Right cardiac atrium (tissue), 5 donors: ENCODE measurements at regions of chr17 and their contacts with region 1.

Region 1: DNA sequence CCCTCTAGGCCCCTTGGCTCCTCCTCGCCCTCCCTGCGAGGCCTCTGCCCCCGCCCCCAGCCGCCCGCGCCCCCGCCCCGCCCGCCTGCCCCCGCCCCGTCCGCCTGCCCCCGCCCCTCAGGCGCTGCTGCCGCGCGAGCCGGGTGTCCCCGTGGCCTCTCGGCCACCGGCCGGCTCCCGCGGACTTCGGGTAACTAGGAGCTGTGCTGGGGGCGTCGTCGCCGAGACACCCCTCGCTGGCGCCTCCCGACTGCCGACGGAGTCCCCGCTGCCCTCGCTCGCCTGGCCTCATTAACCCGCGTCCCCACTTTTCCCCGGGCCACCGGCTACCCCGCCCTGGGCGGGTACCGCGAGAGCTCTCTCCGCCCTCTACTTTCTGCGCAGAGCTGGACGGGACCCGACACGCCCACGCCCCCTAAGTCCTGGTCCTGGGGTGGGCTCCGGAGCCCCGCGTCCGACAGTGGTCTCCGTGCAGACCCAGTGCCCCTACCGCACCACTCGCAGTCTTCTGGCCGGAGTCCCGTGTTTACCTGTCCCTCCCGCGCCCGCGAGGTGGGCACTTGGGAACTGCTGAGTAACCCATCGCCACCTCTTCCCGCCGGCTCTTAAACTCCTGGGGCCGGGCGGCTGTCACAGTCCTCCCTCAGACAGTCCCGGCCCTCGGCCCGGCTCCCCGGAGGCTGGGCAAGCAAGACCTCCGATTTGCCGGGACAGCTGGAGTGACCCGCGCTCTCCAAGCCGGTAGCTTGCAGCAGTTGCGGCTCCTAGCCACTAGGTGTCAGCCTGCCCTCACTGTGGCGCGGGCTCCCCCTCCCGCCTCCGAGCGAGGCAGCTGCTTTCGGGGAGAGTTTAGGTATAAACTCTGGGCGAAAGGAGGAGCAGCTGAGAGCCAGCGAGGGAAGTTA is at the start of gene TLCD1:
- DNase-seq: peak; percentile 91 to 97 (median 96)
- ATAC-seq: peak; percentile 75 to 79
- H3K4me3 ChIP-seq: peak within 1 kb of the TSS; percentile 52
- H3K27ac ChIP-seq: peak within 1 kb of the TSS; percentile 24
- H3K4me1 ChIP-seq: peaks cover 6% of the 10 kb centered on the region
- H3K27me3 ChIP-seq: no peaks in the 10 kb centered on the region
- total RNA-seq, gene TLCD1: 1.7 to 3.8 (median 2.5) TPM

Region 2: GRCh38 chr17:28750178-28751047 is 23.9 kb after region 1 on chr17:
- intact Hi-C with region 1: loop called in 1 of 4 experiments (anchors 2 kb)
- DNase-seq: peak; percentile 90 to 98 (median 96)
- ATAC-seq: peak; percentile 67 to 78
- H3K4me3 ChIP-seq: no peak overlapping the region
- H3K27ac ChIP-seq: no peak overlapping the region
- H3K4me1 ChIP-seq: peaks cover 1% of the 10 kb centered on the region
- H3K27me3 ChIP-seq: no peaks in the 10 kb centered on the region

Region 3: GRCh38 chr17:28916302-28916934 is 189.9 kb after region 1 on chr17:
- intact Hi-C with region 1: loop called in 1 of 4 experiments (anchors 10 kb)
- DNase-seq: peak in 1 of 3 donors; percentile 77
- ATAC-seq: peak; percentile 44 to 54
- H3K4me3 ChIP-seq: no peak overlapping the region
- H3K27ac ChIP-seq: no peak overlapping the region
- H3K4me1 ChIP-seq: no peaks in the 10 kb centered on the region
- H3K27me3 ChIP-seq: no peaks in the 10 kb centered on the region

Region 4: GRCh38 chr17:28951991-28952975 is 225.8 kb after region 1 on chr17:
- intact Hi-C with region 1: loop called in 1 of 4 experiments (anchors 5 kb)
- DNase-seq: peak; percentile 96 to 99 (median 97)
- ATAC-seq: peak; percentile 89 to 91
- H3K4me3 ChIP-seq: peak overlapping the region; percentile 66
- H3K27ac ChIP-seq: peak overlapping the region; percentile 99
- H3K4me1 ChIP-seq: no peaks in the 10 kb centered on the region
- H3K27me3 ChIP-seq: no peaks in the 10 kb centered on the region

Region 5: GRCh38 chr17:29111816-29112499 is 385.5 kb after region 1 on chr17:
- intact Hi-C with region 1: loop called in 1 of 4 experiments (anchors 10 kb)
- DNase-seq: peak; percentile 75 to 90 (median 89)
- ATAC-seq: peak; percentile 60 to 69
- H3K4me3 ChIP-seq: no peak overlapping the region
- H3K27ac ChIP-seq: no peak overlapping the region
- H3K4me1 ChIP-seq: peaks cover 8% of the 10 kb centered on the region
- H3K27me3 ChIP-seq: no peaks in the 10 kb centered on the region